ENCODE measurements at regions of chr22 and their contacts with region 1.

Region 1: DNA sequence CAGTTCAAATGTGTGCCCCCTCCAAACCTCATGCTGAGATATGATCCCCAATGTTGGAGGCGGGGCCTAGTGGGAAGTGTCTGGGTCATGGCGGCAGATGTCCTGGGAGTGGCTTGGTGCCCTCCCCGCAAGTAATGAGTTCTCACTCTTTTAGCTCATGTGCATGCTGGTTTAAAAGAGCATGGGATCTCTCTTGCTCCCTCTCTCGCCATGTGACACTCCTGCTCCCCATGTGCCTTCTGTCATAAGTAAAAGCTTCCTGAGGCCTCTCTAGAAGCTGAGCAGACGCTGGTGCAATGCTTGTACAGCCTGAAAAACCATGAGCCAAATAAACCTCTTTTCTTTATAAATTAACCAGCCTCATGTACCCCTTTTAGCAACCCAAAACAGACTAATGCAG is 98.8 kb downstream of the SGSM3 start:
- DNase-seq: no peak
- ATAC-seq: no peak
- H3K4me3 ChIP-seq: no peak overlapping the region
- H3K27ac ChIP-seq: no peak overlapping the region
- H3K4me1 ChIP-seq: no peaks in the 10 kb centered on the region
- H3K27me3 ChIP-seq: no peaks in the 10 kb centered on the region
- CTCF ChIP-seq: no peak
- EP300 ChIP-seq: no peak
- POLR2A ChIP-seq: no peak
- RAD21 ChIP-seq: no peak

Region 2: DNA sequence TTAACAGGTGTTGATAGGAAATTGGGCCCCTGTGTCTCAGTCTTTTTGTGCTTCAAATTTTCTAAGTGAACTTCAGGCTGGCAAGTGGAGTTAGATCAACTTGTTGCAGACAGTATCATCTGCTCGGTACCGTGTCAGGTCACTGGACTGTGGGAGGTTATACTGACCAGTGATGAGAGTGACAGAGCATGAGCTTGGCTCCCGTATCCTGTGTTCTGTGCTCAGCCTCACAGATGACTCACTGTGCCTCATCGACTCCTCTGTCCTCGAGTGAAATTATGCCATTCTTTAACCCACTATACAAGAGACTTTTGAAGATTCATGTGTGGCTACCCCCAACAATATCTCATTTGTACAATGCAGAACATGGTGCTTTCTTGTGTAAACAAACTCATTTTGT is 560.4 kb before region 1 on chr22:
- CTCF ChIA-PET with region 1: no interaction called
- POLR2A ChIA-PET with region 1: no interaction called
- in situ Hi-C with region 1: no loop called
- intact Hi-C with region 1: loop called (anchors 5 kb)
- DNase-seq: no peak
- ATAC-seq: no peak
- H3K4me3 ChIP-seq: no peak overlapping the region
- H3K27ac ChIP-seq: no peak overlapping the region
- H3K4me1 ChIP-seq: no peaks in the 10 kb centered on the region
- H3K27me3 ChIP-seq: peaks cover 0 to 25% of the 10 kb centered on the region in 2 experiments; a peak in 4 of 5 replicates
- CTCF ChIP-seq: no peak
- EP300 ChIP-seq: no peak
- POLR2A ChIP-seq: no peak
- RAD21 ChIP-seq: no peak

Region 3: GRCh38 chr22:40412441-40412840 is 56.7 kb before region 1 on chr22:
- CTCF ChIA-PET with region 1: no interaction called
- POLR2A ChIA-PET with region 1: no interaction called
- in situ Hi-C with region 1: no loop called
- intact Hi-C with region 1: no loop called
- DNase-seq: no peak
- ATAC-seq: no peak
- H3K4me3 ChIP-seq: no peak overlapping the region
- H3K27ac ChIP-seq: no peak overlapping the region
- H3K4me1 ChIP-seq: no peaks in the 10 kb centered on the region
- H3K27me3 ChIP-seq: no peaks in the 10 kb centered on the region
- CTCF ChIP-seq: no peak
- EP300 ChIP-seq: no peak
- POLR2A ChIP-seq: no peak
- RAD21 ChIP-seq: no peak

Measured in HepG2 (cell line).